G401 (cell line): ENCODE measurements at regions of chr22 and their contacts with region 1.

Region 1: GRCh38 chr22:49789289-49790141 is 38.2 kb downstream of the BRD1 start:
- DNase-seq: no peak

Region 2: DNA sequence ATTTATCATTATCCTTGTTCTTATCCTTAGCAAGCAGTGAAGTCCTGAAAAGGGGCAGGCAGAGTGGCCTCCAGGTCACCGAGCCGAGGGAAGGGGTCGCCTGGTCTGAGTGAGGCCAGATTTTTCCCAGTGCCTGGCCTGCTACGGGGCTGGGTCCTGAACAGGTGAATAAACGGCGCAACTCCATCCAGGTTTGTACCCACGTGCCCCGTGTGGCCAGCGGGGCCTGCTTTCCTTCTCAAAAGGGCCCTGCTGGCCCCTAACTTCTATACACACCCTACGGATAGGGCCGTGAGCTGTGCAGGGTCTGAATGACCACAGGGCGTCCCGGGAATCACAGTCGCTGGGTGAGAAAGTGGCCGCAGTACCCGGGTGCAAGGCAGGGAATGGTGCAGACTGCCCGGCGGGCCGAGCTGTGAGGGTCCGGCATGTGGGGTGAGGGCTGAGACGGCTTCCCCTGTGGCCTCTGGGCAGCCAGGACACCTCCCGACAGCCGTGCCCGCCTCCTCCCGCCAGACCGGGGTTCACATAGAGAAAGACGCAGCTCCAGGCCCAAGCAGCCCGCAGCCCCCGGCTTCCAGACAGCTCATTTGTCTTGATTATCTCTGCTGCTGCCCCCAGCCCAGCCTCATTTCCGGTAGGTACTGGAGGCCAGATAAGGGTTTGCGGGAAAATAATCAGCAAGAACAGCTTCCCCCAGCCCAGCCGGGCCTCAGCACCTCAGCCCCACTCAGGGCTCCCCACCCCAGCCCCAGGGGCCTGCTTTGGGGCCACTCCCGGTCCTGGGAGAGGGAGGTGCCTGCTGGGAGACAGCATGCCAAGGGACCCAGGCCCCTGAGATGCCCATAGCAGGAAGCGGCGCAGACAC is 85.2 kb before region 1 on chr22:
- in situ Hi-C with region 1: no loop called
- DNase-seq: no peak

Region 3: GRCh38 chr22:49724893-49725474 is 64.5 kb before region 1 on chr22:
- in situ Hi-C with region 1: no loop called
- DNase-seq: peak; percentile 64

Region 4: DNA sequence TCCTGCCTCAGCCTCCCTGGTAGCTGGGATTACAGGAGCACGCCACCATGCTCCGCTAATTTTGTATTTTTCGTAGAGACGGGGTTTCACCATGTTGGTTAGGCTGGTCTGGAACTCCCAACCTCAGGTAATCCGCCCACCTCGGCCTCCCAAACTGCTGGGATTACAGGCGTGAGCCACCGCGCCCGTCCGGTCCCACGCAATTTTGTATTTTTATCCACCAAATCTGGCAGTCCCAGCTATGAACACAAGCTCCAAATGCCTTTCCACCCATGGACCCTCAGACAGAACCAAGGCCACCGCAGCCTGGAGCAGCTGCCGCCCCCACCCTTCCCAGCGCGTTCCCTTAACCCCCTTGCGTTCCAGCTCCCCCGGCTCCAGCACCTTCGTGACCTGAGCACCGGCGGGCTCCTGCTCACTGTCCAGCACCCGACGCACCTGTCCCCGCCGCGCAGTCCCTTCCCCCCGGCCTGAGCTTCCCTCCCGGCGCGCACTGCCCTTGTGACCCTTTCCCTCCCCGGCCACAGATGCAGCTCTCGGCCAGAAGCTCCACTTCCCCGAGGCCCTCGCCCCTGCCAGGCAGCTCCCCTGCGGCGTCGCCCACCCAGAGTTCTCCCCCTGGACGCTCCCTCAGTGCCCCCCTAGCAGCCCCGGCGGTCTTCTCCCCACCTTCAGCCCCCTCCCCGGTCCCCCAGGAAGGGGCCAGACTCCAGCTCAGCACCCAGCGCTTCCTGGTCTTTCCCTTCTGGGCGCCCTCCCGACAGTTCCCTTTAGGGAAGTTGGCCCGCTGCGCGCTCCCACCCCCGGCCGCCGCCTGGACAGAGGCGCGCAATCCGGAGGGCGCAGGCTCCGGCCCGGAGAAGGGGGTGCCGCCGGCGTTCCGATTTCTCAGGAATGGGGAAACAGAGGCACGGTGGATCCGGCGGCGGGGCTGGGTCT is 58.5 kb after region 1 on chr22:
- in situ Hi-C with region 1: no loop called
- DNase-seq: no peak

Region 5: DNA sequence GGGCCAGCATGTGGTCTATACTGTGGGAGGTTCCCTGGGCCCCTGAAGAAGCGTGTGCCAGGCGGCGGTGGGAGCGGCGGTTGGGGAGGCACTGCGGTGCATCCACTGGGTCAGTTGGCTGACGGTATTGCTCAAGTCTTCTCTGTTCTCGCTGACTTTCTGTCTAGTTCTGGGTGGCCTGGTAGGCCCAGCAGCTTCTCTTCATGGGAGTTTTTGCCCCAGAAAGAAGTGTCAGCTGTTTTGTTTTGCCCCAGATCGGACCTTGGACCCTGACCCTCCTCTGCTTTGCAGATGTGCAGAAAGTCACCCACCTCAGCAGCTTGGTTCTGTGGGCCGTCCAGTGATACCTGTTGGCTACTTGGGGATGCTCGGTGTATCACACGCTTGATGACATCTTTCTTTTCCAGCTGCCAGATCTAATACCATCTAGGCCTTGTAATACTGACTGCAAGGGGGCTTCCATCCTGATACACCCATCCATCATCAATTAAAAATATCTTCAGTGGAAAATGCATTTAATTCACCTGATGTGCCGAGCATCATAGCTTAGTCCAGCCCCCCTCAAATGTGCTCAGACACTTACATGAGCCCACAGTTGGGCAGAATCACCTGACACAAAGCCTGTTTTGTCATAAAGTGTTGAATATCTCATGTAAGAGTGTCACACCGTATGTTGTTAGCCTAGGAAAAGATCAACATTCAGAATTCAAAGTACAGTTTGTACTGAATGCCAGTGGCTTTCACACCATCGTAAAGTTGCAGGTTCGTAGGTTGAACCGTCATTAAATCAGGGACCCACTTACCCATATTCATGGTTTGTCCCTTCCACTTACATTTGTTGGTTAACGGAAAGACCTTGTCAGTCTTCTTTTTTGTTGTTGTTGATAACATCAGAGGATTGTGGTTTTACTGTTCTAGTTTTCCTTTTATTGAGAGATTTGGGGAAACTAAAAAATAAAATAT is 78.1 kb after region 1 on chr22:
- in situ Hi-C with region 1: no loop called
- DNase-seq: no peak

Region 6: GRCh38 chr22:49917974-49918910 is 128.7 kb after region 1 on chr22 and contains the starts of genes ALG12 and CRELD2:
- in situ Hi-C with region 1: loop called (anchors 25 kb)
- DNase-seq: peak; percentile 98
- total RNA-seq, gene ALG12: 23.8 and 24.1 TPM in 2 replicates
- total RNA-seq, gene CRELD2: 85.5 and 121 TPM in 2 replicates